Dendritic cell treated with granulocyte-macrophage colony-stimulating factor and Interleukin-4, amounts not matched to agents 40 ng/mL and 50 ng/mL, for 4 days (primary cell): ENCODE measurements at regions of chr4 and their contacts with region 1.

Region 1: GRCh38 chr4:143773998-143774895 is 73.8 kb upstream of the FREM3 start:
- H3K4me3 Mint-ChIP-seq: no peak overlapping the region
- H3K27ac Mint-ChIP-seq: no peak overlapping the region
- H3K4me1 Mint-ChIP-seq: no peaks in the 10 kb centered on the region
- H3K27me3 Mint-ChIP-seq: no peaks in the 10 kb centered on the region

Region 2: GRCh38 chr4:144014808-144015207 is 240.6 kb after region 1 on chr4:
- intact Hi-C with region 1: loop called (anchors 10 kb)
- H3K4me3 Mint-ChIP-seq: no peak overlapping the region
- H3K27ac Mint-ChIP-seq: no peak overlapping the region
- H3K4me1 Mint-ChIP-seq: no peaks in the 10 kb centered on the region
- H3K27me3 Mint-ChIP-seq: no peaks in the 10 kb centered on the region

Region 3: DNA sequence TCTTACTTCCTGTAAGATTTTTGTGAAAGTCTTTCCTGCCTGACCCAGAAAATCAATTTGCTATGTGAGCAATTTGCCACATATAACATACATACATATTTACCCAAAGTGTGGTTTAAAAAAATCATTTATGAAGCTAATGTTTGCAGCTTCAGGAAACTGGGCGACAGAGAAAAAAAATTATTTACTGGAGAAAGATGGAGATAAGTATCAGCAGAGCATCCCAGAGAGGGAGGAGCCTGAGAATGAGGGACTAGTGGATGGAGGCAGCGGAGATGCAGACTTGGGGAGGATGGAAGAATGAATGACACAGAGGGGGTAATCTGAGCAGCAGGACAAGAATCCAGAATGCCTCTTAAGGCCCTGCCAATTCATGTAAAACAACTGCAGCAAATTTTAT is 367.2 kb after region 1 on chr4:
- intact Hi-C with region 1: loop called (anchors 5 kb)
- H3K4me3 Mint-ChIP-seq: no peak overlapping the region
- H3K27ac Mint-ChIP-seq: no peak overlapping the region
- H3K4me1 Mint-ChIP-seq: no peaks in the 10 kb centered on the region
- H3K27me3 Mint-ChIP-seq: no peaks in the 10 kb centered on the region